Heart left ventricle (tissue), 16 donors: ENCODE measurements at regions of chr6 and their contacts with region 1.

Region 1: DNA sequence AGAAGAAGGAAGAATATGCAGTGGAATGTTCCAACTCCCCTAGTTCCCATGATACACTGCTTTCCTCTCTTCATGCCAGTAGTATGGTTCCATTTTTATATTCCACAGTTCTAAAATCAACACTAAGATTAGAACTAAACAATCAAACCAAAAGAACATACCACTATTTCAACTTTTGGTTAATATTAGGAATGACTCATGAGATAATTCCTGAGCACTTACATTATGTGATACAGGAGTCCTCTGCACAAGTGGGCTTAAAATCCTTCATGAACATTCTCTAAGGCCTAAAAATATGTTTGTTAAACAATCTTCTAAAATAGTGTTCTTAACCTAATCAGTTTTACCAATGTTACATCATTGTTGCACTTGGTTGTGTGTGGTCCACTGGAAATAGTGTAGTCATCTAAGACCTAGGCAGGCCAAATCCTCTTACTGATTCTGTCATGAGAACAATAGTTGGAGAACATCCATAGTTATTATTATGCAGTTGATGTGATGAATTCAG is 30.3 kb upstream of the RCAN2 start:
- DNase-seq: no peak
- ATAC-seq: peak; percentile 74 to 92 (median 85)
- H3K4me3 ChIP-seq: no peak overlapping the region
- H3K27ac ChIP-seq: peak overlapping the region; percentile 0 to 78 (median 40)
- H3K4me1 ChIP-seq: peaks cover 0 to 30% (median 11%) of the 10 kb centered on the region in 12 donors
- H3K27me3 ChIP-seq: no peaks in the 10 kb centered on the region
- CTCF ChIP-seq: no peak
- POLR2A ChIP-seq: no peak

Region 2: GRCh38 chr6:46468403-46469010 is 53.0 kb before region 1 on chr6:
- intact Hi-C with region 1: no loop called
- DNase-seq: no peak
- ATAC-seq: peak in 1 of 4 donors; percentile 13
- H3K4me3 ChIP-seq: no peak overlapping the region
- H3K27ac ChIP-seq: peak overlapping the region in 5 of 12 donors; percentile 12 to 44 (median 22)
- H3K4me1 ChIP-seq: peaks cover 0 to 88% (median 52%) of the 10 kb centered on the region in 12 donors
- H3K27me3 ChIP-seq: no peaks in the 10 kb centered on the region
- CTCF ChIP-seq: no peak
- POLR2A ChIP-seq: no peak

Region 3: DNA sequence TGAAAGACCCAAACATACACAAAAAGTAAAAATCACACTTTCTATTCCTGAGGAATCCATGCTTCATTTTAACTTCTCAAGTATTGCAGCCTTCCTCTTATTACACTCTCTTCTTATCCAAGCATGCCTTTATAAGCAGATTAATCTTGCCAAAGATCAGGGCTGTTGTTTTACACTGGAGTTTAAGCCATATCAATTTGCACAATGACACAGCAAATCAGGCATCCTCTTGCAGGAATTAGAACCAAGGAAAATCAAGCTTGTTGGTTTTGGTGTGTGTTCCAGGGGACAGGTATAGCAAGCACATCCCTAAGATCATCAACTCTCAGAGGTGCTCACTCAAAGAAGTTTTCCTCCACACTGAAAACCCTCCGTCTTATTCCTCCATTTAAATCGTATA is 61.6 kb after region 1 on chr6:
- intact Hi-C with region 1: loop called in 1 of 10 experiments (anchors 10 kb)
- DNase-seq: no peak
- ATAC-seq: no peak
- H3K4me3 ChIP-seq: no peak overlapping the region
- H3K27ac ChIP-seq: no peak overlapping the region
- H3K4me1 ChIP-seq: peaks cover 0 to 12% (median 0%) of the 10 kb centered on the region in 12 donors
- H3K27me3 ChIP-seq: no peaks in the 10 kb centered on the region
- CTCF ChIP-seq: no peak
- POLR2A ChIP-seq: no peak

Region 4: GRCh38 chr6:46612645-46613044 is 91.1 kb after region 1 on chr6:
- intact Hi-C with region 1: loop called in 2 of 10 experiments (anchors 5 kb)
- DNase-seq: peak in 4 of 5 donors; percentile 33 to 70 (median 49)
- ATAC-seq: peak; percentile 61 to 87 (median 76)
- H3K4me3 ChIP-seq: no peak overlapping the region
- H3K27ac ChIP-seq: peak overlapping the region in 5 of 12 donors; percentile 10 to 55 (median 28)
- H3K4me1 ChIP-seq: peaks cover 0 to 14% (median 2%) of the 10 kb centered on the region in 12 donors
- H3K27me3 ChIP-seq: no peaks in the 10 kb centered on the region
- CTCF ChIP-seq: no peak
- POLR2A ChIP-seq: no peak